Psoas muscle (tissue), 8 donors: ENCODE measurements at regions of chr3 and their contacts with region 1.

Region 1: DNA sequence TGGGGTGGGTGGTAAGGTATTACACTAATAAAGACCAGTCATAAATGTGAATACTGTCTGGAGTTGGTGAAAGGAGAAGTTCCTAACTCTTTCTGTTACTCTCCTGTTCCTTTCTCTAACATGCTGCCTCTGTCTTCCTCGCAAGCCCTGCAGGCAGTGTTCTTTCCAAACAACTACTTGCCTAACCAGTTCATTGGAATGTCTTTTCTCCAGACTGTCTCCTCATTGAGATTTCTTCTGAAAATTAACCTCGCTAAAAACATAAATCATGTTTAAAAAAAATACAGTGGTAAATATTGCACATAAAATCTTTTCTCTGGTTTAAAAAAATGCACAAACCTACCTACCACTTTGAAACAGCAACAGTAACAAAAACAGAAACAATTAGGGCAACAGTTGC is 135.2 kb downstream of the TP63 start:
- DNase-seq: no peak
- ATAC-seq: no peak
- H3K4me3 ChIP-seq: no peak overlapping the region
- H3K27ac ChIP-seq: no peak overlapping the region
- H3K4me1 ChIP-seq: peaks cover 23% of the 10 kb centered on the region
- H3K27me3 ChIP-seq: no peaks in the 10 kb centered on the region
- CTCF ChIP-seq: no peak

Region 2: GRCh38 chr3:189698811-189699210 is 67.6 kb before region 1 on chr3:
- intact Hi-C with region 1: no loop called
- DNase-seq: no peak
- ATAC-seq: no peak
- H3K4me3 ChIP-seq: no peak overlapping the region
- H3K27ac ChIP-seq: no peak overlapping the region
- H3K4me1 ChIP-seq: peaks cover 57% of the 10 kb centered on the region
- H3K27me3 ChIP-seq: no peaks in the 10 kb centered on the region
- CTCF ChIP-seq: no peak

Region 3: DNA sequence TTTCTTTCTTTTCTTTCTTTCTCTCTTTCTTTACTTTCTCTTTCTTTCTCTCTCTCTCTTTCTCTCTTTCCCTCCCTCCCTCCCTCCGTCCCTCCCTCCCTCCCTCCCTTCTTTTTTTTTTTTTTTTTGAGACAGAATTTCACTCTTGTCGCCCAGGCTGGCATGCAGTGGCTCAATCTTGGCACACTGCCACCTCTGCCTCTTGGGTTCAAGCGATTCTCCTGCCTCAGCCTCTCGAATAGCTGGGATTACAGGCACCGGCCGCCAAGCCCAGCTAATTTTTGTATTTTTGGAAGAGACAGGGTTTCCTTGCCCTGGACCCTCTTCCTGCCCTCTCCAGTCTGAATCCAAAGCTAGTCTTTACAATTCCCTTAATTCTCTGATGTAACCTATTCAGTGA is 32.4 kb before region 1 on chr3:
- intact Hi-C with region 1: loop called in 1 of 2 experiments (anchors 5 kb)
- DNase-seq: no peak
- ATAC-seq: no peak
- H3K4me3 ChIP-seq: no peak overlapping the region
- H3K27ac ChIP-seq: no peak overlapping the region
- H3K4me1 ChIP-seq: peaks cover 16% of the 10 kb centered on the region
- H3K27me3 ChIP-seq: no peaks in the 10 kb centered on the region
- CTCF ChIP-seq: no peak